Panc1 (cell line): ENCODE measurements at regions of chr7 and their contacts with region 1.

Region 1: GRCh38 chr7:134004829-134005505 is 122.2 kb upstream of the LRGUK start:
- DNase-seq: no peak
- ATAC-seq: no peak
- H3K4me3 ChIP-seq: no peak overlapping the region
- H3K27ac ChIP-seq: no peak overlapping the region
- H3K4me1 ChIP-seq: no peaks in the 10 kb centered on the region
- H3K27me3 ChIP-seq: no peaks in the 10 kb centered on the region
- CTCF ChIP-seq: no peak

Region 2: DNA sequence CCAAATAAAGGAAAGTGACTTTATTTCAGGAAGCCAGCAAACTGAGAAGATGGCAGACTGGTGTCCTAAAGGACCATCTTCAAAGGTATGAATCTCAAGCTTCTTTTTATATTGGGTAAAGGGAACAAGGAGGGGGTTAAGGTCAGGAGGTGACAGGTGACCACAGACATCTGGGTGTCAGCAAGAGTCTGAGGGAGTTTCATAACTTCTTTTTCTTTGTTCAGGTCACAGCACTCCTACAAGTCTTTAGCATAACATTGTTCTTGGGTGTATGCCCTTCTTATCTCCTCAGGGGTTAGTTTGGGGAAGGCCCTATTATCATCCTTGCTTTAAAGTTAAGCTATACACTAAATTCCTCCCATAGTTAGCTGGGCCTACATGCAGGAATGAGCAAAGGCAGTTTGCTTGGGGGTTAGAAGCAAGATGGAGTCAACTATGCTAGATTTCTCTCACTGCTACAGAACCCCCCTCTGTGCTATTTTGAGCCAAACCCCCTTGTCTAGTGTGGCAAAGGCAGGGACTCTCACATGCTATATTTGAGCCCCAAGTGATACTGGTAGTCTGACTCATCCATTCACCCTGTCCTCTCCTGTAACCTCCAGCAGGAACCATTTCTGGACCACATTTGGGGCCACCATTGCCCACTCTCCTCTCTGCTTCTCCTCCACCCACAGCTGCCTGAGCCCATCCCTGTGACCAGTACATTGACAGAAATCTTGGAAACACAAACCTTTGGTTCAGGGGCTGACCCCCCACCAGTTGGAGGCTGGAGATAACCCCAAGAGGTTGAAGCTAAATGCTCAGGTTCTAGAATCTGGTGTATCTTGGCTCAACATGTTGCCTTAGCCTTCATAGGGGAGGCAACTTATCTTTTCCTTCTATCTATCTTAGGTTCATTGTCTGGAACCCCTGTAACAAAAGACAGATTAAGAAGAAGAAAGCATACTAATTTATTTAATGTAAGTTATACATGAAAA is 66.7 kb after region 1 on chr7:
- CTCF ChIA-PET with region 1: interaction called, 11 read pairs
- POLR2A ChIA-PET with region 1: no interaction called
- in situ Hi-C with region 1: no loop called
- intact Hi-C with region 1: no loop called
- DNase-seq: no peak
- ATAC-seq: no peak
- H3K4me3 ChIP-seq: no peak overlapping the region
- H3K27ac ChIP-seq: no peak overlapping the region
- H3K4me1 ChIP-seq: no peaks in the 10 kb centered on the region
- H3K27me3 ChIP-seq: no peaks in the 10 kb centered on the region
- CTCF ChIP-seq: no peak